Left ventricle myocardium superior (tissue), 1 donor: ENCODE measurements at regions of chr16 and their contacts with region 1.

Region 1: DNA sequence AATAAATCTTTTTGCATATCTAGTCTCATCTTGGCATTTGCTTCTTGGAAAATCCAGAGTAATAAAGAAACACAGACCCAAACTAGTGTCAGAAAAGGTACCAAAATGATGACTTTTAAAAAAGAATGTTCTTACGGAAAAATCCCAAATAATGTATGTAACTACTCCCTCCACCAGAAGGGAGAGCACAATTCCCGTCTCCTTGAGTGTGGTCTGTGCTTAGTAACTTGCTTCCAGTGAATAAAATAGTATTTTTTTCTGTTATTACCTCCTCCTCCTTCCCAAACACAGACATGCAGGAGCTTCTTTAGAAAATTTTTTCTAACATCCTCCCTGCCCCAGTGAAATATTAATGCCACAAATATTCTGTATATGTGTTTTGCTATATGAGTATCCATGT is 358.1 kb downstream of the ZFHX3 start:
- DNase-seq: no peak
- ATAC-seq: no peak

Region 2: DNA sequence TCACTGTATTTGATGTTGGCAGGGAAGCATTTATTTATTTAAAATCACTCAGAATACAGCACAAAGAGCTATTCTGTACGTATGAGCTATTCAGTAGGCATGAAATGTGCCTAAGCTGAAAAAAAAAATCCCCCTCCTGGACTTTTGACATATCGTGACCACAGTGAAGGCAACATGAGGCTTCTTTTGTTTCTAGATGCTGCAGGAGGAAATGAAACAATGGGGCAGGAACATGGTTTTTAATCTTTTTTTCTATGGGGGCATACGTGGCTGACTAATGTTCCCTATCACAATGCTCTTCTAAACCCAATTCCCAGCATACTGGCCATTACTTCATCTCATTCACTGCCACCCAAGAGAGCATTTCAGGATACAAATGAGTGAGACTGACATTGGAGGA is 326.9 kb before region 1 on chr16:
- intact Hi-C with region 1: loop called (anchors 5 kb)
- DNase-seq: no peak
- ATAC-seq: no peak

Region 3: GRCh38 chr16:72787514-72788268 is 97.8 kb after region 1 on chr16:
- intact Hi-C with region 1: no loop called
- DNase-seq: peak; percentile 71
- ATAC-seq: peak; percentile 85